Ascending aorta (tissue), 2 donors: ENCODE measurements at regions of chr2 and their contacts with region 1.

Region 1: GRCh38 chr2:33033606-33034081 is 86.9 kb downstream of the LTBP1 start:
- DNase-seq: no peak
- H3K4me3 ChIP-seq: peak overlapping the region; percentile 27 to 67
- H3K27ac ChIP-seq: peak overlapping the region in 1 of 2 donors; percentile 29
- H3K4me1 ChIP-seq: peaks cover 0 to 12% of the 10 kb centered on the region in 2 donors
- H3K27me3 ChIP-seq: no peaks in the 10 kb centered on the region
- CTCF ChIP-seq: peak; percentile 66 to 76 (median 72)

Region 2: DNA sequence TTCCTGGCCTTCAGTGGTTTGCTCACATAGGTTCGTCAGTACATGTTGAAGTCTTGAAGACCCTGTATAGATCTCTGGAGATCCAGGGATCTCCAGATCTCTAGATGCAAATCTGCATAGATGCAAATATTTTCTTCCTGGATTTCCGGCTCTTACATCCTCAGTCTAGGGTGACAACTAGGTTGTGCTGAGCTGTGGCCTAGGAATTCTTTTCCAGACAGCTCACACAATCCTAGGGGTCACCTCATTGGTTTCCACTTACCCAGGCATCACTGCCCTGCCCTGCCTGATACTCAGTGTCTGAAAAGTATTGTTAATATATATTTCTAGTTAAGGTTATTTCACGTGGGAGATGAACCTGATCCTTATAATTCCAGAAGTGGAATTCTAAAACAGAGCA is 510.9 kb before region 1 on chr2:
- intact Hi-C with region 1: no loop called
- DNase-seq: no peak
- H3K4me3 ChIP-seq: no peak overlapping the region
- H3K27ac ChIP-seq: no peak overlapping the region
- H3K4me1 ChIP-seq: no peaks in the 10 kb centered on the region
- H3K27me3 ChIP-seq: no peaks in the 10 kb centered on the region
- CTCF ChIP-seq: no peak

Region 3: DNA sequence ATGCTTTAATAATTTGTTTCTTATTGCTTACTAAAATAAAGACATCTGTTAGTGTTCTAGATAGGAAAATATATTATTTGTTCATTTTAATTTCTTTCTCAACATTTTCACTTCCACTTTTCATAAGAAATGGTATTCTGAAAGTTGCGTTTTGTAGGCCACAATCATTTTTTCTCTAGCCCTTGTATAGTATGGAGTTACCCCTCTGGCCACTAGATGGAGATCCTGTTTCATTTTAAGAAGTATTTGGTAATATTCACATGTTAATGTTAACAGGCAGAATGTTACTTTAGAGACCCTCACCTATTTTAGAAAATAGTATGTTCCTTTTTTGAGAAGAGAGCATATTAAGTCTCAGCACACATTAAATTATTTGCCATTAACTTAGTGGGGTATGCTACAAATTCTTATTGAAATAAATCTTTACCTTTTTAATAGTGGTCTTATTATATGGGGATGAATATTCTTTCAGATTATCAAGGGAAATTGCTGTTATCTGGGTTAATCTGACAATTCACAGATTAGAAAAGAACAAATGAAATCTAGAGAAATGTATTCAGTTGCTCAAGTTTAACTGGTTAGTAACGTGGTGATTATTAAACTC is 479.7 kb before region 1 on chr2:
- intact Hi-C with region 1: loop called (anchors 2 kb)
- DNase-seq: no peak
- H3K4me3 ChIP-seq: no peak overlapping the region
- H3K27ac ChIP-seq: no peak overlapping the region
- H3K4me1 ChIP-seq: no peaks in the 10 kb centered on the region
- H3K27me3 ChIP-seq: no peaks in the 10 kb centered on the region
- CTCF ChIP-seq: peak; percentile 58 to 70 (median 64)

Region 4: DNA sequence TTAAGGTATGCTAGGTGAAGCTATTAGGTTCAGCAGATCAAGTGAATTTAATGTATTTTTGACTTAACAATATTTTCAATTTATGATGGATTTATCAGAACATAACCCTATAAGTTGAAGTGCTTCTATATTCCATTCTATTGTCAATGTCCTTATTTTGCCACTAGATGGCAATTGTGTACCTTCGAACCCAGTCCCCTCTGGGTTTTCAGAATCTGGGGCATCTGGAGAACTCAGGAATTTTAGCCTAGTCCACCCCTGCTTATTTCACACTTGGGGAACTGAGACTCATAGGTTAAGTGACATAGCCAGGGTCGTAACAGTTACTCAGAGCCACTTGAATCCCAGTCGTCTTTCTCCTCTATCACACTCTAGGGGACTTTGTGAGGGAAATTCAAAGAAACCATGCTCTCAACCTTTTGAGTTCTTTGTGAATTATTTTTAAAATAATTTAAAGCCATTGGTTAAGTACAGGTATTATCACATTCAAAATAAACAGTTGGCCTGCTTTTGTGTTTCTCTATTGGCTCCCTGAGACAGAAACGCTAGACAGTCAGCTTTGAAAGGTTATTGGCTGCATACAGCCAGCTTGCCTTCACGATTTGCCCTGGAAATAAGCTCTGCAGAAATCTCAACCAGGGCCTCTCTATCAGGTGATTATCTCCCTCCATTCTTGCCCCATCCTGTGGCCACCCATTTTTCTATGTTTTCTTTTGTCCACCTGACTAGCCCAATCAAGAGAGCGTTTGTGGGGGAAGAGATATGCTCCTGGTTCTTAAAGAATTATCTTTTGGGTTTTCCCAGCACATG is 260.8 kb before region 1 on chr2:
- intact Hi-C with region 1: loop called (anchors 1 kb)
- DNase-seq: no peak
- H3K4me3 ChIP-seq: no peak overlapping the region
- H3K27ac ChIP-seq: no peak overlapping the region
- H3K4me1 ChIP-seq: no peaks in the 10 kb centered on the region
- H3K27me3 ChIP-seq: no peaks in the 10 kb centered on the region
- CTCF ChIP-seq: peak; percentile 52 to 68 (median 55)

Region 5: DNA sequence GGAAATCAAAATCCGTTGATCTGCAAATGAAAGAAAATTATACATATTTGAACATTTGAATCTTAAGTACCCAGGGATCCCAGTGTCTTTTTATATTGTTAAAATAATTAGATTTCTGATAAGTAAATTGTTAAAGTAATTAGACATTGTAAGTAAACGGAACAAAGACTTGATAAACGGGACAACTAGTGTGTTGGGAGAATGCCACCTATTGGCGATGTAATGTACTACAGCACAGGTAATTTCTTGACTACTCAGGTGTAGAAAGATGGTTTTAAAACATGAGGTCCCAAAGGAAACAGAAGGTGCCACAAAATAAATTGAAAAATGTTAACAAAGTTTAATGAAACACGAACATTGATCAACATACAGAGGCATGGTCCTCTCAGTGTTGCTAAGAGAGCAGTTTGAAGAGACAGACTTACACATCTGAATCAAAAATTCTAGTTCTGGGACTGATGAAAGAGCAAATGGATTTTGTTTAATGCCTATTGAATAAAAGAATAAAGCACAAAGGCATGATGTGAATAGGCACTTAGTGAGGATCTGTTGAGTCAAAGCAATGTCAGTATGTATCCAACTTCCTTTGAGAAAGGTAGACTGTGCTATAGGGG is 339.4 kb after region 1 on chr2:
- intact Hi-C with region 1: loop called (anchors 2 kb)
- DNase-seq: no peak
- H3K4me3 ChIP-seq: no peak overlapping the region
- H3K27ac ChIP-seq: peak overlapping the region in 1 of 2 donors; percentile 26
- H3K4me1 ChIP-seq: peaks cover 0 to 13% of the 10 kb centered on the region in 2 donors
- H3K27me3 ChIP-seq: no peaks in the 10 kb centered on the region
- CTCF ChIP-seq: peak; percentile 44 to 74 (median 65)

Region 6: DNA sequence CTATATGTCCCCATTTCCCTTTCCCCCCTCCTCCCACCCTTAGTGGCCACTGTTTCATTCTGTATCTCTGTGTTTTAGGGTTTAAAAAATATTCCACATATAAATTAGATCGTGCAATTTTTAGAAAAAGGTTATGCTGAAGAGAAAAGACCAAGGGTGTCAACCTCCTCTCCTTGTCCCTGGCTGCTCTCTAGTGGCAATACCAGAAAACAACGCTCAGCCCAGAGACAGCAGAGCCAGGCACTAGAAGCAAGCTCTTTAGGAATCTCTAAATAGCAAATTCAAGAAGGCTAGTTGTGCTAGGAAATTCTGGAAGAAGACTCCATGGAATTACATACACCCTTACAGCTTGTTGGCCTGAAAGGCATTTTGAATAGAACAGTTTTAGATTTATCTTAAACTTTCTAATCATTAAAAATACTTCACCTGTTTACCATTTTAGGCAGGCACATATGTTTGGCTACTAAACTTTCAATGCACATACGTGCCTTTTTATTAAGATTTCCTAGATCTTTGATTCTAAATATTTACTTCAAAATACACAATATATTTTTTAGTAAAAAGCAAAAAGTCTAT is 407.7 kb after region 1 on chr2:
- intact Hi-C with region 1: loop called (anchors 1 kb)
- DNase-seq: peak in 1 of 2 donors; percentile 80
- H3K4me3 ChIP-seq: no peak overlapping the region
- H3K27ac ChIP-seq: no peak overlapping the region
- H3K4me1 ChIP-seq: peaks cover 5 to 7% of the 10 kb centered on the region in 2 donors
- H3K27me3 ChIP-seq: no peaks in the 10 kb centered on the region
- CTCF ChIP-seq: peak; percentile 62 to 87 (median 75)